Mammary epithelial cell (primary cell): ENCODE measurements at regions of chr7 and their contacts with region 1.

Region 1: GRCh38 chr7:1579481-1580421 is 9.9 kb upstream of the PSMG3 start:
- DNase-seq: peak; percentile 38
- H3K4me3 ChIP-seq: no peak overlapping the region
- H3K27ac ChIP-seq: no peak overlapping the region
- H3K4me1 ChIP-seq: no peaks in the 10 kb centered on the region
- H3K27me3 ChIP-seq: no peaks in the 10 kb centered on the region
- CTCF ChIP-seq: peak; percentile 67 to 85

Region 2: GRCh38 chr7:1619152-1620006 is 39.6 kb after region 1 on chr7:
- CTCF ChIA-PET with region 1: no interaction called
- dilution Hi-C with region 1: loop called (anchors 5 kb)
- in situ Hi-C with region 1: no loop called
- intact Hi-C with region 1: no loop called
- DNase-seq: no peak
- H3K4me3 ChIP-seq: no peak overlapping the region
- H3K27ac ChIP-seq: no peak overlapping the region
- H3K4me1 ChIP-seq: no peaks in the 10 kb centered on the region
- H3K27me3 ChIP-seq: no peaks in the 10 kb centered on the region
- CTCF ChIP-seq: no peak

Region 3: DNA sequence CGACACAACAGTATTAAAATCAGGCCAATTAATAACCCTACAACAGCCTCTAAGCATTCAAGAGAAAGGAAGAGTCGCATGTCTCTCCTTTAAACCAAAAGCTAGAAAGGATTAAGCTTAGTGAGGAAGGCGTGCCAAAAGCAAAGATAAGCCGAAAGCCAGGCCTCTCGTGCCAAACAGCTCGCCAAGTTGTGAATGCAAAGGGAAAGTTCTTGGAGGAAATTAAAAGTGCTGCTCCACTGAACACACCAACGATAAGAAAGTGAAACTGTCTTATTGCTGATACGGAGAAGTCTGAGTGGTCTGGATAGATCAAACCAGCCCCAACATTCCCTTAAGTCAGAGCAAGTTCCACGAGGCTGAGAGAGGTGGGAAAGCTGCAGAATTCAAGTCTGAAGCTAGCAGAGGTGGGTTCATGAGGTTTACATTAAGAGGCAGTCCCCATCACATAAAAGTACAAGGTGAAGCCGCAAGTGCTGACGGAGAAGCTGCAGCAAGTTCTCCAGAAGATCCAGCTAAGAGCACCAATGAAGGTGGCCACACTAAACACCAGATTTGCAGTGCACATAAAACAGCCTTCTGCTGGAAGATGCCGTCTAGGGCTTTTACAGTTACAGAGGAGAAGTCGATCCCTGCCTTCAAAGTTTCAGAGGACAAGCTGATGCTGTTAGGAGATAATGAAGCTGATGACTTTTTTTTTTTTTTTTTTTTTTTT is 458.2 kb after region 1 on chr7:
- CTCF ChIA-PET with region 1: no interaction called
- dilution Hi-C with region 1: loop called (anchors 5 kb)
- in situ Hi-C with region 1: no loop called
- intact Hi-C with region 1: no loop called
- DNase-seq: no peak
- H3K4me3 ChIP-seq: no peak overlapping the region
- H3K27ac ChIP-seq: no peak overlapping the region
- H3K4me1 ChIP-seq: peaks cover 8% of the 10 kb centered on the region
- H3K27me3 ChIP-seq: no peaks in the 10 kb centered on the region
- CTCF ChIP-seq: no peak

Region 4: GRCh38 chr7:2209146-2209960 is 629.6 kb after region 1 on chr7:
- CTCF ChIA-PET with region 1: no interaction called
- dilution Hi-C with region 1: no loop called
- in situ Hi-C with region 1: loop called in 1 of 2 experiments (anchors 25 kb)
- intact Hi-C with region 1: loop called (anchors 1 kb)
- DNase-seq: peak; percentile 11
- H3K4me3 ChIP-seq: no peak overlapping the region
- H3K27ac ChIP-seq: no peak overlapping the region
- H3K4me1 ChIP-seq: peaks cover 5% of the 10 kb centered on the region
- H3K27me3 ChIP-seq: no peaks in the 10 kb centered on the region
- CTCF ChIP-seq: peak; percentile 61 to 75

Region 5: DNA sequence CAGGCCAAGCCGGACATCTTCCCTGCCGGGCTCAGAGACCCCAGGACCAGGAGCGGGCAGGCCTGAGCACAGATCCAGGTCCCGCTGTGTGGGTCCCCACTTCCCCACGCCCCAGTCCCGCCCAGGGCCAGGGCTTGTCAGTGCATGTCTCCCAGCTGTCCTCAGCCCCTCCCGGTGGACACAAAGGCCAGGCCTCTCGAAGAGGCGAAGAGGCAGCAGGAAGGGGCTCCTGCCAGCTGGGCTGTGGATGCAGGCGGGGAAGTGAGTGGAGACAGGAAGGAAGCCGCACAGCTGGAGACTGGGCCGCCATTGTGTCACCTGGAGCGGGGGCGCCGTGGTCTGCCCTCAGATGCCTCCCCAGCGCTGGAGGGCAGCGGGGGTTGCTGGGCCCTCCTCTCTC is 891.6 kb after region 1 on chr7:
- CTCF ChIA-PET with region 1: no interaction called
- dilution Hi-C with region 1: no loop called
- in situ Hi-C with region 1: no loop called
- intact Hi-C with region 1: loop called (anchors 1 kb)
- DNase-seq: peak; percentile 60
- H3K4me3 ChIP-seq: no peak overlapping the region
- H3K27ac ChIP-seq: no peak overlapping the region
- H3K4me1 ChIP-seq: peaks cover 13% of the 10 kb centered on the region
- H3K27me3 ChIP-seq: no peaks in the 10 kb centered on the region
- CTCF ChIP-seq: no peak